HEK293 (cell line): ENCODE measurements at regions of chr17 and their contacts with region 1.

Region 1: GRCh38 chr17:63621766-63622519 is at the start of gene MAP3K3:
- H3K4me3 ChIP-seq: peak within 1 kb of the TSS; percentile 93
- H3K27ac ChIP-seq: peak within 1 kb of the TSS; percentile 89
- H3K4me1 ChIP-seq: peaks cover 13% of the 10 kb centered on the region
- CTCF ChIP-seq: peak; percentile 93

Region 2: GRCh38 chr17:63549946-63550807 is 71.8 kb before region 1 on chr17 and contains the start of gene DCAF7:
- CTCF ChIA-PET with region 1: no interaction called
- POLR2A ChIA-PET with region 1: interaction called, 24 read pairs
- H3K4me3 ChIP-seq: peak within 1 kb of the TSS; percentile 97
- H3K27ac ChIP-seq: peak within 1 kb of the TSS; percentile 96
- H3K4me1 ChIP-seq: peaks cover 12% of the 10 kb centered on the region
- CTCF ChIP-seq: peak; percentile 35; the same call in 1 of the 2 replicates

Region 3: DNA sequence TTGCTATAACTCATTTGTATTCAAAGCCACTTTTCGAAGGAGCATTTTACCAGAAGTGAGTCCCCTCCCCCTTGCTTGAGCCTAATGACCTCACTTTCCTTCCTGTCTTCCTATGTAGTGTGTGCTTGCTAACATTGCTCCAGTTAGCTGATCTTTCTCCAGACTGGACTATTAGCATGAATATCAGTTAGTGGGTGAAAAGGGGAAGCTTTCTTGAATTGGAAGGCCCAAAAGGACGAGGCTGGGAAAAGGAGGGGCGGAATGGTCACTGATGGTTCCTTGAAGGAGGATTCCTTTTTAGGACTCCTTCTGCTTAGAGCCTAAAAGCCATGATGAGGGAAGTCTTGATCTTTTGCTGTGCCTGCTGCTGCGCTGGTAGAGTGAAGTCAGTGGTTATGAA is 12.2 kb after region 1 on chr17:
- CTCF ChIA-PET with region 1: interaction called, 7 read pairs
- POLR2A ChIA-PET with region 1: interaction called, 16 read pairs
- H3K4me3 ChIP-seq: no peak overlapping the region
- H3K27ac ChIP-seq: no peak overlapping the region
- H3K4me1 ChIP-seq: peaks cover 3% of the 10 kb centered on the region
- CTCF ChIP-seq: no peak

Region 4: GRCh38 chr17:63697341-63698286 is 75.7 kb after region 1 on chr17:
- CTCF ChIA-PET with region 1: interaction called, 4 read pairs
- POLR2A ChIA-PET with region 1: interaction called, 11 read pairs
- H3K4me3 ChIP-seq: no peak overlapping the region
- H3K27ac ChIP-seq: peak overlapping the region; percentile 0; the same call in 1 of the 2 replicates
- H3K4me1 ChIP-seq: peaks cover 3% of the 10 kb centered on the region; the same call in 1 of the 2 replicates
- CTCF ChIP-seq: peak; percentile 95

Region 5: DNA sequence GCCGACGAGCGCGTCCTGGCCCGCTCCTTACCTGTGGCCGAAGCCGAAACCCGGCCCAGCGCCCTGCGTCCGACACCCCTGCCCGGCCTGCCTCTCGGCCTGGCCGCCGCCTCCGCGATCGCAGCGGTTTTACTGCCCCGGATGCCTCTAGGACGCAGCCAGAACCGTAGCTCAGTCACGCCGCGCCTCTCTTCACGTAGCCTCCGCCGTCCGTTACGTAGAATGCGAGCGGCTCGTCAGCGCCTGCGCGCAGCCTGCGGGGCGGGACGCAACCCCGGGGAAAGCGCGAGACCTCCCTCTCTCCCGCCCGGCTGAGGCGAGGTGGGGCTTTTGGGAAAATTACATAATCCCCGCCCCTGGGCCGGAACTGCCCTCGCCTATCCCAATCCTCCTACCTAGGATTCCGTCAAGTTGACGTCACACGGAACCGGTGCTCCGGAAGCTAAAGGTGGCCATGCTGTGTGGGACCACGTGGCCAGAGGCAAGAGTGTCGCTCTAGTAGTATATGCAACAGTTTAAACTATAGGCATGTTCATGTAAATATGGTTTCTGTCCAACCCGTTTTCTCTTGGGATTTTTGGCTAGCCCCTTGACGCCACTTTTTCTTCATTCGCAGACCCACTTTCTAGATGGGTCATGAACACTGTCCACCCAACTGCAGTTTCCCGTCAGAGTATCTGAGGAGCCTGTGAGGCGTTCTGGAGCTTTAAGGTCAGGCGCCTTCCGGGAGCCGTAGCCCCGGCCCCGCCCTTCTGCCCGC is 151.6 kb after region 1 on chr17 and contains the start of gene CCDC47:
- CTCF ChIA-PET with region 1: no interaction called
- POLR2A ChIA-PET with region 1: interaction called, 21 read pairs
- H3K4me3 ChIP-seq: peak within 1 kb of the TSS; percentile 90
- H3K27ac ChIP-seq: peak within 1 kb of the TSS; percentile 91
- H3K4me1 ChIP-seq: no peaks in the 10 kb centered on the region; the same call in 1 of the 2 replicates
- CTCF ChIP-seq: no peak